ENCODE measurements at regions of chr10 and their contacts with region 1.

Region 1: GRCh38 chr10:84264611-84265141 is 19.8 kb downstream of the RGR start:
- DNase-seq: peak; percentile 31 to 87
- H3K4me3 ChIP-seq: no peak overlapping the region
- H3K27ac ChIP-seq: no peak overlapping the region
- H3K4me1 ChIP-seq: no peaks in the 10 kb centered on the region
- H3K27me3 ChIP-seq: no peaks in the 10 kb centered on the region
- CTCF ChIP-seq: peak; percentile 89 to 99 (median 97)
- EP300 ChIP-seq: no peak
- POLR2A ChIP-seq: no peak
- RAD21 ChIP-seq: peak; percentile 98 to 99

Region 2: DNA sequence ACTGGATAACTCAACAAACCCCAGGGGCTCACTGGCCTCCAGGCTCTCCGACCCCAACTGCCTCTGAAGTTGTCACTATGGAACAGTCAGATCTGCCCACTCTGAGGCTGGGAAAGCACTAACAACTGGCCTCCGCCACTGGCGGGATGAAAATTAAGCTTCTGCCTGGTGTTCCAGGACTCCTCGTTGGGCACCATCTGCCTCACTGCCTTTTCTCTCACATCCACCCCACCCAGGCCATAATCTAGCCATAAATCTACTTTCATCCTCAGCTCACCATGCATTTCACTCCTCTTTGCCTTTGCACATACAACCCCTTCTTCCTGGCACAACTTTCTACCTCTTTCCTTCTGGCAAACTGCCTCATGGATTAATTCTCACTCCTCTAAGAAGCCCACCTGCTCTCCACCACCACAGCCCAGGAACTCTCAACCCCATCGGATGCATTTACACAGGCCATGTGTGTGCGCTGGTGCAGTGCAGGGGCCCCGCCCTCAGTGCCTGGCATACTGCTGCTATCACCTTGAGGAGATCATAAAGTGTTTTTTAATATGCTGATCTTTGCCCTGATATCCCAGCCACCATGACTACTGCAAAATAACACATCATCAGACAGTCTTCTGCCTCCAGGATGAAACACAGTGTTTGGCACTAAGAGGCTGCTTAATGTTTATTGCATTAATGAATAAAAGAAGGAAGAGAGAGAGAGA is 66.3 kb before region 1 on chr10:
- CTCF ChIA-PET with region 1: no interaction called
- POLR2A ChIA-PET with region 1: no interaction called
- DNase-seq: no peak
- H3K4me3 ChIP-seq: no peak overlapping the region
- H3K27ac ChIP-seq: no peak overlapping the region
- H3K4me1 ChIP-seq: peaks cover 0 to 5% (median 2%) of the 10 kb centered on the region in 4 experiments; a peak in 4 of 7 replicates
- H3K27me3 ChIP-seq: peaks cover 2 to 34% (median 28%) of the 10 kb centered on the region in 4 experiments
- CTCF ChIP-seq: no peak
- EP300 ChIP-seq: no peak
- POLR2A ChIP-seq: no peak
- RAD21 ChIP-seq: no peak

Region 3: GRCh38 chr10:84237199-84238051 is 27.3 kb before region 1 on chr10:
- CTCF ChIA-PET with region 1: interaction called, 18 read pairs
- POLR2A ChIA-PET with region 1: no interaction called
- DNase-seq: peak; percentile 38 to 94
- H3K4me3 ChIP-seq: no peak overlapping the region; a peak in 1 of 8 replicates
- H3K27ac ChIP-seq: no peak overlapping the region
- H3K4me1 ChIP-seq: peaks cover 0 to 2% (median 0%) of the 10 kb centered on the region in 4 experiments; a peak in 3 of 7 replicates
- H3K27me3 ChIP-seq: peaks cover 0 to 10% (median 7%) of the 10 kb centered on the region in 4 experiments; a peak in 5 of 7 replicates
- CTCF ChIP-seq: peak; percentile 79 to 90 (median 83)
- EP300 ChIP-seq: no peak
- POLR2A ChIP-seq: no peak
- RAD21 ChIP-seq: peak; percentile 37 to 56; a peak in 3 of 4 replicates

Region 4: DNA sequence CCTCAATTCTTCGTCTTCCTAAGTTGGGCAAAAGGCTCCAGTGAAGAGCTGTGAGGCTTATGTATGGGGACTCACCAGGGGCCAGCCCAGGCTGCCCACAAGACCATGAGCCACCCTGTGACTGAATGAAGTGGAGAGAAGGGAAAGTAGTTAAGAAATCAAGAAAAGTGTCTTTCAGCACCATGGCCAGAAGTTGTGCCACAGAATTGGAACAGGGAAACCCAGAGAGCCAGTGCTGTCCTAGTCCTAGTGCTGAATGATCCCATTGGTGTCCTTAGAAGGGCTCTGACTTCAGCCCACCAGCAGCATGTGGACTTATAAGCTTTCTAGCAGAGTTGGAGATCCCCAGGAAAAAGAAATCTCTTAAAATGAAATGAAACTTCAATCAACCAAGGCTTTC is 26.7 kb after region 1 on chr10:
- CTCF ChIA-PET with region 1: interaction called, 33 read pairs
- POLR2A ChIA-PET with region 1: no interaction called
- DNase-seq: no peak
- H3K4me3 ChIP-seq: no peak overlapping the region
- H3K27ac ChIP-seq: no peak overlapping the region
- H3K4me1 ChIP-seq: peaks cover 3 to 8% (median 5%) of the 10 kb centered on the region in 4 experiments; a peak in 3 of 7 replicates
- H3K27me3 ChIP-seq: no peaks in the 10 kb centered on the region
- CTCF ChIP-seq: no peak
- EP300 ChIP-seq: no peak
- POLR2A ChIP-seq: no peak
- RAD21 ChIP-seq: no peak

Region 5: DNA sequence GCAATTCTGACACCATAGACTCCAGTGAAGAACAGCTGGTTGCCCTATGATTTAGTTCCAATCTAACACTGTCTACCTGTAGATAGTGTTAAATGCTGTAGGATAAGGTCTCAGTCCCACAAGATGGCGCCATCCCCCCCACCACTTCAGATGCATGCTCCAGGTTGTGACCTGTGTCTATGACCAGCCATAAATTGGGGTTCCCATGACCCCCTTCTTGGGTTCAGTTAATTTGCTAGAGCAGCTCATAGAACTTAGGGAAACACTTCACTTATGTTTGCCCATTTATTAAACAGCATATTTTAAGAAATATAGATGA is 76.8 kb after region 1 on chr10:
- CTCF ChIA-PET with region 1: interaction called, 11 read pairs
- POLR2A ChIA-PET with region 1: no interaction called
- DNase-seq: no peak
- H3K4me3 ChIP-seq: no peak overlapping the region; a peak in 1 of 8 replicates
- H3K27ac ChIP-seq: no peak overlapping the region
- H3K4me1 ChIP-seq: peaks cover 0 to 13% (median 7%) of the 10 kb centered on the region in 4 experiments; a peak in 4 of 7 replicates
- H3K27me3 ChIP-seq: no peaks in the 10 kb centered on the region
- CTCF ChIP-seq: peak in 2 of 3 experiments; percentile 33 to 36; a peak in 3 of 4 replicates
- EP300 ChIP-seq: no peak
- POLR2A ChIP-seq: no peak
- RAD21 ChIP-seq: peak in 1 of 2 experiments; percentile 23; a peak in 1 of 4 replicates

Region 6: DNA sequence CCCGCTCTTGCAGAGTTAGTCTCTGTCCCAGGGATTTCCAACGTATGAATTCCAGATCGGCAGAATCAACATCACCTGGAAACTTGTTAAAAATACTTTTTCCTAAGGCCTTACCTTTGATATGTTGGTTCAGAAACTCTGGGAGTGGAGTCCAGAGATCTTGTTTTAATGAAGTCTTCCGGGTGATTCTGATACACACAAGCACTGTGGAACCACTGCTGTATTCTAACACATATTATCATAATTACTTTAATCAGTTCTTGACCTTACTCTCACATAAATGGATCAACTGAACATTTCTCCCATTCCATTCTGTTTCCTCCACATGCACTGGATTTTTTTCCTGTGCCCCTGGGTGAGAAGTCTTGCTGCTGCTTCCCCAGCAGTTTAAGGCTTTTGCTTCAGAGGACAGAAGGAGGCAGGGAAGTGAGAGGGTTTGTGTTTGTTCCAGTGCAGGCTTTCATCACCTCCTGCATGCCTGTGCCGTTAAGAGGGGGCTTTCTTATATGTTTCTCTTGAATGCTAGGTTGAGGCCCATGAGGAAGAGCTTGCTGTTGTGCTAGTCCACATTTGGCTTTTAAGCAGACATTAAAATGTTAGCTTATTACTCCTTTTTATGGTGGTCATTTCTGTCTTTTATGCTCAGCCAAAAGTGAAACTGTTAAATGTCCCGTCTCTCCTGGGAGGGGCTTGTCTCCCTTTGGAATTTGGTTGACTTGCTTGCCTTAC is 96.1 kb after region 1 on chr10:
- CTCF ChIA-PET with region 1: interaction called, 22 read pairs
- POLR2A ChIA-PET with region 1: no interaction called
- DNase-seq: no peak
- H3K4me3 ChIP-seq: no peak overlapping the region
- H3K27ac ChIP-seq: no peak overlapping the region
- H3K4me1 ChIP-seq: peaks cover 0 to 5% (median 2%) of the 10 kb centered on the region in 4 experiments; a peak in 2 of 7 replicates
- H3K27me3 ChIP-seq: no peaks in the 10 kb centered on the region
- CTCF ChIP-seq: no peak
- EP300 ChIP-seq: no peak
- POLR2A ChIP-seq: no peak
- RAD21 ChIP-seq: no peak

Measured in H1 (cell line).